CD14-positive monocyte (primary cell): ENCODE measurements at regions of chr10 and their contacts with region 1.

Region 1: GRCh38 chr10:100442530-100442929 is 20.3 kb upstream of the WNT8B start:
- DNase-seq: no peak
- H3K4me3 ChIP-seq: no peak overlapping the region
- H3K4me3 Mint-ChIP-seq: no peak overlapping the region
- H3K27ac ChIP-seq: no peak overlapping the region
- H3K27ac Mint-ChIP-seq: no peak overlapping the region
- H3K4me1 ChIP-seq: no peaks in the 10 kb centered on the region
- H3K4me1 Mint-ChIP-seq: no peaks in the 10 kb centered on the region
- H3K27me3 ChIP-seq: no peaks in the 10 kb centered on the region
- H3K27me3 Mint-ChIP-seq: peaks cover 4 to 13% (median 12%) of the 10 kb centered on the region in 3 donors
- CTCF ChIP-seq: no peak

Region 2: DNA sequence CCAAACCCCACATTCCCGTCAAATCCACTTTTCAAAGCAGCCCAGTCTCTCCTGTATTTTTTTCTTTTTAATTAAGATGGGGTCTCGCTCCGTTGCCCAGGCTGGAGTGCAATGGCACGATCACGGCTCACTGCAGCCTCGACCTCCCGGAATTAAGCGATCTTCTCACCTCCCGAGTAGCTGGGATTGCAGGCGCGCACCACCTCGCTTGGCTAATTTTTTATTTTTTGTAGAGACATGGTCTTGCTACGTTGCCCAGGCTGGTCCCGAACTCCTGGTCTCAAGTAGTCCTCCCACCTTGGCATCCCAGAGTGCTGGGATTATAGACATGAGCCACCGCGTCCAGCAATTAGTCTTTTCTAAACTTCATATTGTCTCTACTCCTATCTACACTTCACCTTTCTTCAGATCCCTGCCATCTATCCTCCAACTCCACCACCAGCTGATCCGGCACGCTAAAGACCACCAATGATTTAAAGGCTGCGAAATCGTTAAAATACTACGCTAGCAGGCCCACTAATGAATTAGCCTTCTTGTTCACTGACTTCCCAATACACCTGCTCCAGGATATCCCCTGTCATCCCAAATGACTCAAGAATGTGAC is 212.6 kb before region 1 on chr10:
- intact Hi-C with region 1: no loop called
- DNase-seq: no peak
- H3K4me3 ChIP-seq: peak overlapping the region; percentile 85 to 99 (median 89)
- H3K4me3 Mint-ChIP-seq: peak overlapping the region; percentile 89 to 99
- H3K27ac ChIP-seq: peak overlapping the region; percentile 31 to 91
- H3K27ac Mint-ChIP-seq: peak overlapping the region; percentile 84 to 95 (median 92)
- H3K4me1 ChIP-seq: peaks cover 11 to 18% of the 10 kb centered on the region in 2 donors
- H3K4me1 Mint-ChIP-seq: peaks cover 25% of the 10 kb centered on the region
- H3K27me3 ChIP-seq: no peaks in the 10 kb centered on the region
- H3K27me3 Mint-ChIP-seq: no peaks in the 10 kb centered on the region
- CTCF ChIP-seq: no peak

Region 3: DNA sequence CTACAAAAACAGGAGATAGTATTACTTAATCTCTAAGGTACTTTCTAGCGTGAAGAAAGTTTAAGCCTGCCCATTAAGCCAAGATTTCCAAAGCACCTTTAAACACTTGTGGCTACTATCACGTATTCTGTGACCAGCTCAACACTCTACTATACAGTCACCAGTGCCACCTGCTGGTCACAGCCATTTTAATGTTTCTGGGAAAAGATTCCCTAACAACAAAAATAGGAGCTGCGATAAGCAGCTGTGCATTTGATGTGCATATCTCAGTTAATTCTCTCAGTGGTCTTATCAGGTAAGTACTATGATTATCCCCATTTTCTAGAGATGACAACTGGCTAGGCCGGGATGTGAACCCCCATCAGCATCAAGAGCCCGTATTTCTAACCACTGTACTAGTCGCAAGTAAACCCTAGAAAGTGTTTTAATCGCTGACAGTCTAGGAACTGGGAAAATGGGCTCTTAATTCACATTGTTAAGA is 76.3 kb after region 1 on chr10:
- intact Hi-C with region 1: loop called (anchors 5 kb)
- DNase-seq: peak; percentile 19 to 59 (median 37)
- H3K4me3 ChIP-seq: no peak overlapping the region
- H3K4me3 Mint-ChIP-seq: peak overlapping the region in 1 of 2 donors; percentile 84
- H3K27ac ChIP-seq: no peak overlapping the region
- H3K27ac Mint-ChIP-seq: no peak overlapping the region
- H3K4me1 ChIP-seq: peaks cover 5 to 10% of the 10 kb centered on the region in 2 donors
- H3K4me1 Mint-ChIP-seq: peaks cover 12% of the 10 kb centered on the region
- H3K27me3 ChIP-seq: peaks cover 16 to 18% of the 10 kb centered on the region in 2 donors
- H3K27me3 Mint-ChIP-seq: peaks cover 20 to 24% (median 22%) of the 10 kb centered on the region in 3 donors
- CTCF ChIP-seq: peak; percentile 82